A673 (cell line): ENCODE measurements at regions of chrX and their contacts with region 1.

Region 1: DNA sequence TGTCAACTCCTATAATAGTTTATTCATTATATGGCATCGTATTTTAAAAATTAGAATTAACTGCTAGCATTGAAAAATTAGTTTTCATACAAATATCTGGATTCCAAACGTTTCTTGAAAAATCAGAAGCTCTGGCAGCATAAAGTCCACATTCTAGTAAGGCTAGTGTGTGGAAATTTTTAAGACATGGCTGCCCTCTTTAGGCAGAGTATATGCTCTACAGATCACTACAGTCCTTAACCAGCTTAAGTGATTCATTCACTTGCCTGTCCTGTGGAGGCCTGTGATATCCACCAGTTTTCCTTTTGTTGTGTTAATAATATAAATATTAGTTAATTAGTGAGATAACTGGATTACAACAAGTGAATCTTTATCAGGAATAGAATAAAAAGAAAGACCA is 287.2 kb downstream of the OPHN1 start:
- DNase-seq: peak; percentile 42
- H3K4me3 ChIP-seq: no peak overlapping the region
- H3K27ac ChIP-seq: no peak overlapping the region
- H3K4me1 ChIP-seq: no peaks in the 10 kb centered on the region
- H3K27me3 ChIP-seq: no peaks in the 10 kb centered on the region
- CTCF ChIP-seq: peak; percentile 49

Region 2: DNA sequence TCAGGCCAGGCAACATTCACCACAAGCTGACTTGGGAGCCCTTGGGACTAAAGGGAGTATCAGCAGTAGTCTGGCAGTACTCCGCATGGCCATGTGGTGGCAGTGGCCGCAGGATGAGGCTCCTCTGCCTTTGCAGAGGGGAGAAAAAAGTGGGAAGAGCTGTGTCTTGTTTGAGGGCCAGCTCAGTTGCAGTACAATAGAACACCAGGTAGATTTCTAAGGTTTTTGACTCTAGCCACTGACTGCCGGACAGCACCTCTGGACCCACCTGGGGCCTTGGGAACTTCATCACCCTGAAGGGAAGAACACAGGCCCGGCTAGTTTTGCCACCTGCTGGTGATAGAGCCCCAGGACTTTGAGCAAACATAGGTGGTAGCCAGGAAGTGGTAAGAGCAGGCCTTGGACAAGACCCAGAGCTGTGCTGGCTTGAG is 127.4 kb before region 1 on chrX:
- CTCF ChIA-PET with region 1: interaction called, 9 read pairs
- POLR2A ChIA-PET with region 1: no interaction called
- intact Hi-C with region 1: loop called (anchors 5 kb)
- DNase-seq: peak; percentile 41
- H3K4me3 ChIP-seq: no peak overlapping the region
- H3K27ac ChIP-seq: no peak overlapping the region
- H3K4me1 ChIP-seq: no peaks in the 10 kb centered on the region
- H3K27me3 ChIP-seq: no peaks in the 10 kb centered on the region
- CTCF ChIP-seq: peak; percentile 68